Naive thymus-derived CD8-positive, alpha-beta T cell (primary cell): ENCODE measurements at regions of chr19 and their contacts with region 1.

Region 1: GRCh38 chr19:47035127-47036096 is 13.0 kb downstream of the TMEM160 start:
- DNase-seq: peak; percentile 92 to 100 (median 96)
- ATAC-seq: peak; percentile 92 to 95
- H3K4me3 Mint-ChIP-seq: peak overlapping the region; percentile 80 to 96 (median 92)
- H3K27ac Mint-ChIP-seq: peak overlapping the region; percentile 46 to 91 (median 86)
- H3K4me1 Mint-ChIP-seq: peaks cover 10 to 23% (median 16%) of the 10 kb centered on the region in 4 donors
- H3K27me3 Mint-ChIP-seq: peaks cover 3 to 20% (median 4%) of the 10 kb centered on the region in 5 donors

Region 2: GRCh38 chr19:47005873-47006272 is 29.5 kb before region 1 on chr19:
- POLR2A ChIA-PET with region 1: no interaction called
- DNase-seq: no peak
- ATAC-seq: peak; percentile 25 to 36
- H3K4me3 Mint-ChIP-seq: peak overlapping the region in 1 of 10 donors; percentile 6
- H3K27ac Mint-ChIP-seq: peak overlapping the region in 1 of 10 donors; percentile 4
- H3K4me1 Mint-ChIP-seq: peaks cover 0 to 15% (median 12%) of the 10 kb centered on the region in 4 donors
- H3K27me3 Mint-ChIP-seq: peaks cover 0 to 11% (median 2%) of the 10 kb centered on the region in 5 donors

Region 3: DNA sequence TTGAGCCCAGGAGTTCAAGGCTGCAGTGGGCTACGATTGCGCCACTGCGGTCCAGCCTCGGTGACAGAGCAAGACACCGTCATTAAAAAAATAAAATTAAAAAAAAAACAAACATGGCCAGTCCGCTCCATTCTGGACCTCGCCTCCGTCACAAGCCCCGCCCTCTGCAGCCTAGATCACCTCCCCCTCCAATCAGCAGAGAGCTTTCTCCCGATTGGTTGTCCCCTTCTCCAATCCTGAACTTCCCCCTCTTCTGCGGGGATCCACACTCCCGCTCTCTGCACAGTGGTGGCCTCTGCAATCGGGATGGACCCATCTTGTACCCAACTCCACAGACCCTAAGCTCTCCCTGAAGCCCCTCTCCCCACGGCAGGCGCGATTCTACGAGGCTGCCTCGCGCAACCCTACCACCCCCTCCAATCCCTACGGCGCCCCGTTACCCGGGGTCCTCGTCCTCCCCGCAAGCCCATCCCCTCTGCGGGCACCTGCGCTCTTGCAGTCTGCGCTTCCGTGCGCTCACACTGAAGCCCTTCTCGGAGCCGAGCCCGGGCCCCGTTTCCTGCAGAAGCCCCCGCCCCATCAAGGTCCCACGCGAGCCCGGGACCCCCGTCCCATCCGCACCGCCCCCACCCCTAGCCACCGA is 12.5 kb after region 1 on chr19:
- POLR2A ChIA-PET with region 1: interaction called, 13 read pairs
- DNase-seq: peak; percentile 41 to 77 (median 56)
- ATAC-seq: peak; percentile 50 to 54
- H3K4me3 Mint-ChIP-seq: peak overlapping the region; percentile 89 to 98 (median 95)
- H3K27ac Mint-ChIP-seq: peak overlapping the region; percentile 81 to 97 (median 94)
- H3K4me1 Mint-ChIP-seq: peaks cover 11 to 24% (median 19%) of the 10 kb centered on the region in 4 donors
- H3K27me3 Mint-ChIP-seq: no peaks in the 10 kb centered on the region